ENCODE measurements at regions of chr14 and their contacts with region 1.

Region 1: DNA sequence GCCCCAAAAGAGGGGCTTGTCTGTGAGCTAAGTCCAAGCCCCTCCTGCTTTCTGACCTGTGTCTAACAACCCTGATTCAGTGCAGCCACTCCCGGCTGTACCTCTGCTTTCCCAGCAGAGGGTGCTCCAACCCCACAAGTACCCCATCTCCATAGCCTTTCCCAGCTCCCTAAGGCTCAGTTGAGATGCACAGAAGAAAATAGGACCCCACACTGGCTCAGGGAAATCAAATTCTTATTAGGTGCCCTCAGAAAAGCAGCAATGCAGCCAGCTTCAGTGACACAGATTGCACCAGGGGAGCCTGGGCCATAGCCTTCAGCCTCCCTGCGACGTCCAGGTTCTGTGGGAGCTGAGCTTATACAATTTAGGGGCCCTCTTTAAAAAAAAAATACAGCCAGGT is 49.9 kb downstream of the LRRC74A start:
- DNase-seq: peak; percentile 55
- H3K4me3 Mint-ChIP-seq: no peak overlapping the region
- H3K27ac Mint-ChIP-seq: no peak overlapping the region
- H3K4me1 Mint-ChIP-seq: no peaks in the 10 kb centered on the region
- H3K27me3 Mint-ChIP-seq: no peaks in the 10 kb centered on the region

Region 2: GRCh38 chr14:76784266-76785264 is 91.5 kb before region 1 on chr14:
- CTCF ChIA-PET with region 1: no interaction called
- POLR2A ChIA-PET with region 1: no interaction called
- DNase-seq: peak; percentile 63
- H3K4me3 Mint-ChIP-seq: no peak overlapping the region
- H3K27ac Mint-ChIP-seq: peak overlapping the region; percentile 63
- H3K4me1 Mint-ChIP-seq: peaks cover 45% of the 10 kb centered on the region
- H3K27me3 Mint-ChIP-seq: no peaks in the 10 kb centered on the region

Region 3: GRCh38 chr14:76887196-76887595 is 11.1 kb after region 1 on chr14:
- CTCF ChIA-PET with region 1: interaction called, 15 read pairs
- POLR2A ChIA-PET with region 1: no interaction called
- DNase-seq: no peak
- H3K4me3 Mint-ChIP-seq: no peak overlapping the region
- H3K27ac Mint-ChIP-seq: no peak overlapping the region
- H3K4me1 Mint-ChIP-seq: peaks cover 12% of the 10 kb centered on the region
- H3K27me3 Mint-ChIP-seq: peaks cover 15% of the 10 kb centered on the region

Region 4: DNA sequence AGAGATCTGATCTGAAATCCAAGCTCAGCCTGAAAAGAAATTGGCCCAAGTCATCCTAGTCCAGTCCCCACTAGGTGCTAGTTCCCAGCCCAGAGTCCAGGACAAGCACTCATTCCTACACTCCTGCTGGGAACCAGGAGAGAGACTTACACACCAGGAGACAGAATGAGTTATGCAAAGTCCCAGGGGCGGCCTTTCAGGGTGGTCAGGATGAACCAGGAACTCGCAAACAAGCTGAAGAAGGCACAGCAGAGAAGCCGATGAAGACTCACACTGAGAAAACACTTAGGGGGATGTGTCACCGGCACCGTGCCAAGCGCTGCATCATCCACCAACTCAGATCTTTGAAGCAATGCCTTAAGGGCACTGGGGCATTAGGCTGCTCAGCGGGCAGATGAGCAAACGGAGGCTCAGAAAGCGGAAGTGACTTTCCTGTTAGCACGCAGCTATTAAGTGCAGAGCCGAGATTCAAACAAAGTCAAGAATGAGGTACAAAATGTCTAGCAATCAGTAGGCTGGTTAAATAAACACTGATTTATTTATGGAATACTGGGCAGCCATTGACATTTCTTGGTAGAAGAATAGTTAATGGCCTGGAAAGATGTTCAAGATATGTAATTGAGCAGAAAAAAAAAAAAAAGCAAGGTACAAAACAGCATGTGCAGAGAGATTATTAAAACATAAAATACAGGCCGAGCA is 28.8 kb after region 1 on chr14:
- CTCF ChIA-PET with region 1: interaction called, 13 read pairs
- POLR2A ChIA-PET with region 1: no interaction called
- DNase-seq: peak; percentile 65
- H3K4me3 Mint-ChIP-seq: no peak overlapping the region
- H3K27ac Mint-ChIP-seq: peak overlapping the region; percentile 25
- H3K4me1 Mint-ChIP-seq: peaks cover 44% of the 10 kb centered on the region
- H3K27me3 Mint-ChIP-seq: peaks cover 6% of the 10 kb centered on the region

Region 5: DNA sequence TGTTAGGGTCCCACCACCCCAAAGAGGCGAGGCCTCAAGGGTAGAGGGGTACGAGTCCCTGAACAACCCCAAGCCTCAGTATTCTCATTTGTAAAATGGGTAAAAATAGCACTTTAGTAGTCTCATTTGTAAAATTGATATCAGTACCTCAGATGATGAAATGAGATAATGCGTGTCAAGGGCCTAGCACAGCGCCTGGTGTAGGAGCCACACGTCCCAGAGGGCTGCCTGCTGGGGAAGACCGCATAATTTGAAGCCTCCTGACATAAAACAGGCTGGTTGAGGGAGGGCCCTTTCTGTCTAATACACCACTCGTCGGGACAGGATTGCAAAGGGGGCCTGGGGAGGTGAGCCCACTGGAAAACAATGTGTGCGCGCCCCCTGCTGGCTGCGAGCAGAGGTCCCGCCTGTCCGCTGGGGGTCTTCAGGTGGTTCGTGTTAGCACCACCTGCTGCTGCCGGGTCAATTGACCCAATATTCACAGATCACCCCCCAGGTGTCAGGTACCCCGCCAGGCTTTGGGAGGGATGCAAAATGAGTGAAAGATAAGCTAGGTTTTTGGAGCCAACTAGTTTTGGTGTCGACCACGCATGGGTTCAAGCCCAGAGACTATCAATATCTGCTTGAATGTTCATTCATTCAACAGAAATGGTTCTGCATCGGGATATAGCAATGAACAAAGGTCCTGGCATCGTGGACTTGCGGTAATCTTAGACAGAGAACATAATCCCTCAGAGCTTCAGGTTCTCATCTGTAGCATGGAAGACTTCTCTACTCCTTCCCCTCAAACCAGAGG is 177.2 kb after region 1 on chr14:
- CTCF ChIA-PET with region 1: interaction called, 10 read pairs
- POLR2A ChIA-PET with region 1: no interaction called
- DNase-seq: peak; percentile 79
- H3K4me3 Mint-ChIP-seq: no peak overlapping the region
- H3K27ac Mint-ChIP-seq: peak overlapping the region; percentile 31
- H3K4me1 Mint-ChIP-seq: peaks cover 26% of the 10 kb centered on the region
- H3K27me3 Mint-ChIP-seq: no peaks in the 10 kb centered on the region

Region 6: DNA sequence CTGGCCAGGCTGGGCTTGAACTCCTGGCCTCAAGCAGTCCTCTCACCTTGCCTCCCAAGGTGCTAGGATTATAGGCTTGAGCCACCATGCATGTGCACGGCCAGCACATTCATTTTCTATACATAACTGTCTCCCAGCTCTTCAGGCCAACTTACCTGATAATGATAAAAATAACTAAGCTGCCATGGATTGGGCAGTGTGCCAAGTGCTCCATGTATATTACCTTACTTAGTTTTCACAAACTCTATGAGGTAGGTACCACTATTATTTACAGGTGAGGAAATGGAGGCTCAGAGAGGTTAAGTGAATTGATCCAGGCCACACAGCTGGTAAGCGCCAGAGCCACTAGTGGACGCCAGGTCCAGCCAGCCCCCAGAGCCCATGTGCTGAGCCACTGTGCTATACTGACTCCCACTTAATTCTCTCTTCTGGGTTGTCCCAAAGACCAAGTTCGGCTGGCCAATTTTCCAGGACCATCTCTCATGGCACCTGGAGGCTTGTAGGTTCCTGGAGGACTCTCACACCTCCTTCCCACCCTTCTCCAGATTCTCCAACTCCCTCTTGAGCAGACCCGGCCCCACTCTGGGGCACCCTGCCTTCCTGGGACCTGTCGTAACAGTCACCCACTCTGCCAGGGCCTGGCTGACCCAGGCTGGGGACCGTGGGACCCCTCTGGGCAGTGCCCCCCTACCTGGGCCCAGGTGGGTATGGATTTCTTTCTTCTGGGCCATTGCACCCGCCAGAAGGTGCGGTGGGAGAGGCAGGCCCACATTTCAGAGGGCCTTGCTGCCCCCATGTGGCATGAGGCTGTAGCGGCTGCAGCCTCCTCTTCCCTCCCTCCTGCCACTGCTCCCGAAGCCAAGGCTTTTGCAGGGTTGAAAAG is 191.8 kb after region 1 on chr14:
- CTCF ChIA-PET with region 1: interaction called, 171 read pairs
- POLR2A ChIA-PET with region 1: no interaction called
- DNase-seq: peak; percentile 61
- H3K4me3 Mint-ChIP-seq: no peak overlapping the region
- H3K27ac Mint-ChIP-seq: no peak overlapping the region
- H3K4me1 Mint-ChIP-seq: peaks cover 2% of the 10 kb centered on the region
- H3K27me3 Mint-ChIP-seq: peaks cover 5% of the 10 kb centered on the region

Region 7: GRCh38 chr14:77076113-77076631 is 200.1 kb after region 1 on chr14:
- CTCF ChIA-PET with region 1: interaction called, 171 read pairs
- POLR2A ChIA-PET with region 1: no interaction called
- DNase-seq: no peak
- H3K4me3 Mint-ChIP-seq: no peak overlapping the region
- H3K27ac Mint-ChIP-seq: no peak overlapping the region
- H3K4me1 Mint-ChIP-seq: no peaks in the 10 kb centered on the region
- H3K27me3 Mint-ChIP-seq: no peaks in the 10 kb centered on the region

Region 8: GRCh38 chr14:77086017-77086736 is 210.1 kb after region 1 on chr14:
- CTCF ChIA-PET with region 1: interaction called, 15 read pairs
- POLR2A ChIA-PET with region 1: no interaction called
- DNase-seq: peak; percentile 27
- H3K4me3 Mint-ChIP-seq: no peak overlapping the region
- H3K27ac Mint-ChIP-seq: peak overlapping the region; percentile 42
- H3K4me1 Mint-ChIP-seq: peaks cover 14% of the 10 kb centered on the region
- H3K27me3 Mint-ChIP-seq: peaks cover 2% of the 10 kb centered on the region

Measured in activated CD4-positive, alpha-beta T cell treated with anti-CD3 and anti-CD28 coated beads, Interleukin-2, amount 10 ng/mL, durations not matched to agents 7 days and 5 days (primary cell).